ENCODE measurements at regions of chr22 and their contacts with region 1.

Region 1: GRCh38 chr22:40525249-40525884 is 111.2 kb downstream of the MRTFA start:
- DNase-seq: peak; percentile 53
- H3K4me3 ChIP-seq: no peak overlapping the region
- H3K27ac ChIP-seq: peak overlapping the region; percentile 13
- H3K4me1 ChIP-seq: peaks cover 16% of the 10 kb centered on the region
- H3K27me3 ChIP-seq: no peaks in the 10 kb centered on the region
- CTCF ChIP-seq: peak; percentile 77

Region 2: DNA sequence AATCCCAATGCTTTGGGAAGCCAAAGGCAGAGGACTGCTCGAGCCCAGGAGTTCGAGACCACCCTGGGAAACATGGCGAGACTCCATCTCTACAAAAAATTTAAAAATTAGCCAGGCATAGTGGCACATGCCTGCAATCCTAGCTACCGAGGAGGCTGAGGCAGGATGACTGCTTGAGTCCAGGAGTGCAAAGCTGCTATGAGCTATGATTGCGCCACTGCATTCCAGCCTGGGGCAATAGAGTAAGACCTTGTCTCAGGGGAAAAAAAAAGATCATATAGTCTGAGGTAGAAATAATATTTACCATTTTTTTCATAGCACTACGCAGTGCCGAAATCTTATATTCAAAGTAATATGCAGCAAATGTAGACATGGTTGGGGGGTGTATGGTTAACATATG is 63.4 kb after region 1 on chr22:
- intact Hi-C with region 1: no loop called
- DNase-seq: no peak
- H3K4me3 ChIP-seq: no peak overlapping the region
- H3K27ac ChIP-seq: no peak overlapping the region
- H3K4me1 ChIP-seq: peaks cover 39% of the 10 kb centered on the region
- H3K27me3 ChIP-seq: no peaks in the 10 kb centered on the region
- CTCF ChIP-seq: no peak

Region 3: GRCh38 chr22:40641269-40641668 is 115.9 kb after region 1 on chr22:
- intact Hi-C with region 1: loop called (anchors 10 kb)
- DNase-seq: no peak
- H3K4me3 ChIP-seq: no peak overlapping the region
- H3K27ac ChIP-seq: no peak overlapping the region
- H3K4me1 ChIP-seq: peaks cover 19% of the 10 kb centered on the region
- H3K27me3 ChIP-seq: no peaks in the 10 kb centered on the region
- CTCF ChIP-seq: no peak